Lower leg skin (tissue), 4 donors: ENCODE measurements at regions of chr3 and their contacts with region 1.

Region 1: GRCh38 chr3:156674046-156674910 is at the start of gene TIPARP:
- DNase-seq: peak; percentile 99 to 100
- H3K4me3 ChIP-seq: peak within 1 kb of the TSS; percentile 92
- CTCF ChIP-seq: peak in 1 of 3 donors; percentile 76
- POLR2A ChIP-seq: peak in 1 of 2 donors; percentile 87
- total RNA-seq, gene TIPARP: 59.1 to 70.3 (median 68.5) TPM

Region 2: DNA sequence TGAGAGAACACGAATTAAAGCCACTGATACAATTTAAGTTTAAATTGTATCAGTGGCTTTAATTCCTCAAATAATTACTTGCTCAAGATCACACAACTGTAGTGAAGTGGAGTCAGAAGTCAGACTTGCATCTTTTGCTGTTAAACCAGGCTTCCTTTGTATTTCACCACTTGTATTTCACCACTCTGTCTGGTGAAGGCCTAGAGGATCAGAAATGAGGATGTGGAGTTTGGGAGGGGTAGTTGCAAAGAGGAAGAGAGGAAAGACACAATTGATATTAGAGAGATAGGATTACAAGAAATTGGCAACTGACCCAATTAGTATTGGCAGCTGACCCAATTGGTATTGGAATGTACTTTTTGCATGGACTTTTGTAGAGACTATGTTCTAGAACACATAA is 1956.2 kb before region 1 on chr3:
- intact Hi-C with region 1: no loop called
- DNase-seq: no peak
- H3K4me3 ChIP-seq: no peak overlapping the region
- CTCF ChIP-seq: no peak
- POLR2A ChIP-seq: no peak

Region 3: DNA sequence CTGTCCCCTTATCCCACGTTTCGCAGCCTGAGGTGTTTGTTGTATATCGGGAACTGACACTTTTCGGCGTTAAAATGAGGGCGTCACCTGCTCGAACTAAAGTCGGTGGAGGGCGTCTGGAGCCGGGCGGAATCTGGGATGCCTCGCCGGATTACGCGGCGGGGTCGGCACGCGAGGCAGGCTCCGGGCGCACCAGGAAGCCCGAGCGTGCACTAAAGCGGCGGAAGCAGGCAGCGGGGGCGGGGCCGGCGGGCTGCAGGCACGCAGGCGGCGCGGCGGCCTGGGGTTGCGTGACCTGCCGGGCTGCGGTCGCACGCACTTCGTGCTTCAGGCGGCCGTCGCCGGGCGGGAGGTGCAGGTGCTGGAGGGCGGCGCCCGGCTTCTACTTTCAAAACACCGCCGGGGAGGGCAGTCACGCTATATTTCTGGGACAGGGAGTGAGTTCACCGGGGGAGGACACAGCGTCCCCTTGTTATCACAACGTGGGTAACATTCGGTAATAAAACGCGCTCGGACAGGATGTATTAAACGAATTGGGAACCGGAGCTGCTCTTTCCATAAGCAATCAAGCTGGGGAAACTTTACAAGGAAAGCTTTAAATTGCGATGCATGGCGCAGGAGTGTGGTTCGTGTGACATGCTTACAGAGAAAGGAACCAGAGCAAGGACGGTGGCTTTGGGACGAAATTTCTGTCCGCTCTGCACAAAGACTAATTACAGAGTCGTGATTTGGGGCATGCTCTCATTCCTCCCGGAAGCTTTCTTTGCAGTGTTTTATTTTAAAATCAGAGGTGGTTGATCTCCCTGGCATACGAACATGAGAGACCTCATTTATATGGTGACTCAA is 142.7 kb after region 1 on chr3:
- intact Hi-C with region 1: loop called (anchors 2 kb)
- DNase-seq: peak; percentile 72 to 96
- H3K4me3 ChIP-seq: peak overlapping the region; percentile 44
- CTCF ChIP-seq: no peak
- POLR2A ChIP-seq: no peak

Region 4: DNA sequence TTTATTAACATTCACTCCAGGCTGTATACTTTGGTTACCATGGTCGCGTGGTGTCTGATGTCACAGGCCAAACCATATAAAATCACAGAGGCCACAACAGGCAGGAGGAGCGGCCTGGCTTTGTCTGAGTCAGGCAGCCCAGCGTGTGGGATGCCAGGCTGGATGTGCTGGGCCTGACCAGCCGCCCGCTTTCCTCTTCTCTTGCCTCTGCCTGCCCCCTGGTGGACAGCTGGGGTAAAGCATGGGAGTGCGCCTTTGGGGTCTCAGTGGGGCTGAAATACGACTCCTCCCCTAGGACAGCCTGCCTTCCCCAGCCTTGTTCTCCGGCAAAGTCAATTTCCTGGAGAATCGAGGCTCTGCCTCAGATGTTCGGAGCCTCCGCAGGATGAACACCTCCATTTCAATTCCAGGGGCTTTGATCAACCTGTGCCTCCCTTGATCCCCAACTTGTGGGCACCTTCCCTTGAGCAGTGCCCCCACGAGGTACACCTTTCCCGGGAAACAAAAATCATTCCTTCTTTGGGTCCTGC is 407.5 kb after region 1 on chr3:
- intact Hi-C with region 1: loop called (anchors 5 kb)
- DNase-seq: peak; percentile 85 to 98
- H3K4me3 ChIP-seq: no peak overlapping the region
- CTCF ChIP-seq: peak in 1 of 3 donors; percentile 85
- POLR2A ChIP-seq: no peak

Region 5: GRCh38 chr3:157130467-157131251 is 456.4 kb after region 1 on chr3:
- intact Hi-C with region 1: loop called (anchors 10 kb)
- DNase-seq: peak; percentile 46 to 87
- H3K4me3 ChIP-seq: no peak overlapping the region
- CTCF ChIP-seq: no peak
- POLR2A ChIP-seq: no peak